Activated naive CD4-positive, alpha-beta T cell treated with anti-CD3 and anti-CD28 coated beads for 36 hours (primary cell): ENCODE measurements at regions of chr1 and their contacts with region 1.

Region 1: GRCh38 chr1:76343356-76343755 is 268.8 kb downstream of the ST6GALNAC3 start:
- DNase-seq: no peak
- H3K4me3 Mint-ChIP-seq: no peak overlapping the region
- H3K27ac Mint-ChIP-seq: no peak overlapping the region
- H3K4me1 Mint-ChIP-seq: peaks cover 18% of the 10 kb centered on the region
- H3K27me3 Mint-ChIP-seq: no peaks in the 10 kb centered on the region

Region 2: GRCh38 chr1:76203132-76203531 is 140.2 kb before region 1 on chr1:
- CTCF ChIA-PET with region 1: no interaction called
- intact Hi-C with region 1: no loop called
- DNase-seq: no peak
- H3K4me3 Mint-ChIP-seq: no peak overlapping the region
- H3K27ac Mint-ChIP-seq: no peak overlapping the region
- H3K4me1 Mint-ChIP-seq: no peaks in the 10 kb centered on the region
- H3K27me3 Mint-ChIP-seq: no peaks in the 10 kb centered on the region

Region 3: DNA sequence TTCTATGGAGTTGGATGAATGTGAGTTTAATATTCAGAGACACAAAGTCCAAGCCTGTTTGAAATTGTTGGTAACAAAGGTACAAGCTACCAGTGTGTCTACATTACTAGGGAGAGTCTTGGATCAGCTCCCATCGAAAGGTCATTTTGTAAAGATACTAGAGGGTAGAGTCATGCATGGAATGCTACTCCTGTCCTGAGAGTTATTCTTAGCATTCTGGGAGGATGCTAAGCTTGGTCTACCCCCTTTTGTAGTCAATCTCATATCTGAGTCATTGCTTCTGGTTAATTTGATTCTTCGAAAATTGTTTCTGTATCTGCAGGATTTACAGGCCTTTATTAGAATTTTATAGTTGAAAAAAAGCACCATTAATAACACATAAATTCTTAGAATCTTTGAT is 28.6 kb before region 1 on chr1:
- CTCF ChIA-PET with region 1: no interaction called
- intact Hi-C with region 1: loop called (anchors 2 kb)
- DNase-seq: no peak
- H3K4me3 Mint-ChIP-seq: no peak overlapping the region
- H3K27ac Mint-ChIP-seq: no peak overlapping the region
- H3K4me1 Mint-ChIP-seq: peaks cover 4% of the 10 kb centered on the region
- H3K27me3 Mint-ChIP-seq: no peaks in the 10 kb centered on the region